Mammary epithelial cell (primary cell): ENCODE measurements at regions of chr17 and their contacts with region 1.

Region 1: DNA sequence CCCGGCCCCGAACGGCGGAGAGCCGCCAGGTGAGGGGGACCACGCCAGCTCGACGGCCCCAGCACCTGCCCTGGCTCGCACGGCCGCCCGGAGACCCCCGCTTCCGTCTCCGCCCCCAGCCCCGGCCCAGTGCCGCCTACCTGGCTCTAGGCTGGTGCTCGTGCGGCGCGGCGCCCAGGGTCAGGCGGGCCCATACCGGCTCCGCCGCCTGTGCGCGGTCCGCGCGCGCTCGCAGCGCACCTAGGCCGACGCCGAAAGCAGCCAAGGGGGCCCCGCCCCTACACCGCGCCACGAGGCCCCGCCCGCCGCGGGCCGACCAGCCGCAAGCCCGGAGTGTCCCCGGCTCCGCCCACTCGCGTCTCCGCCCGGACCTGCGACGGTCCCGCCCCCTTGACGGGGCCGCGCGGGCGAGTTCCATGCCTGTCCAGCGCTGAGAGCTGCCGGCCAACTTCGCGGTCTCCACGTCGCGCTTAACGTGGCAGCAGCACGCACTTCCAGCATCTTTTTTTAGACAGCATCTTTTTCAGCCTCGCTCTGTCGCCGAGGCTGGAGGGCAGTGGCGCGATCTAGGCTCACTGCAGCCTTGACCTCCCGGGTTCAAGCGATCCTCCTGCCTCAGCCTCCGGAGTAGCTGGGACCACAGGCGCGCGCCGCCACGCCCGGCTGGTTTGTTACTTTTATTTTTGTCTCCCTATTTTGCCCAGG is at the start of gene SLC25A39:
- DNase-seq: peak; percentile 92
- H3K4me3 ChIP-seq: peak within 1 kb of the TSS; percentile 77 to 85 (median 83)
- H3K27ac ChIP-seq: peak within 1 kb of the TSS; percentile 73
- H3K4me1 ChIP-seq: peaks cover 8% of the 10 kb centered on the region
- H3K27me3 ChIP-seq: no peaks in the 10 kb centered on the region
- CTCF ChIP-seq: no peak
- total RNA-seq, gene SLC25A39: 116 to 169 TPM

Region 2: DNA sequence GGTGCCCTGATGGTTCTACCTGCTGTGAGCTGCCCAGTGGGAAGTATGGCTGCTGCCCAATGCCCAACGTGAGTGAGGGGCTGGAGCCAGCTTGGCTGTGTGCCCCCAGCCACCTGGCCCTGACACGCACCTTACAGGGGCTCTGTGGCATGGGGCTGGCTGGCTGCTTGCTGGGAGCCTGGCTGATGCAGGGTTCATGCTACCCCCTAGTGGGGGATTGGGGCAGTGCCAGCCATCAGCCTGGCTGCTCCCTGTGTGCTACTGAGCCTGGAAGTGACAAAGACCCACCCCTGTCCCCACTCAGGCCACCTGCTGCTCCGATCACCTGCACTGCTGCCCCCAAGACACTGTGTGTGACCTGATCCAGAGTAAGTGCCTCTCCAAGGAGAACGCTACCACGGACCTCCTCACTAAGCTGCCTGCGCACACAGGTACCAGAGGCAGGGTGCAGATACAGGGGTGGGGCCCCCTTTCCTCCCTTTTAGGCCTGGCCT is 26.1 kb after region 1 on chr17:
- CTCF ChIA-PET with region 1: interaction called, 3 read pairs
- dilution Hi-C with region 1: no loop called
- in situ Hi-C with region 1: no loop called
- intact Hi-C with region 1: loop called (anchors 1 kb)
- DNase-seq: peak; percentile 32
- H3K4me3 ChIP-seq: no peak overlapping the region
- H3K27ac ChIP-seq: no peak overlapping the region
- H3K4me1 ChIP-seq: peaks cover 26% of the 10 kb centered on the region
- H3K27me3 ChIP-seq: no peaks in the 10 kb centered on the region
- CTCF ChIP-seq: peak; percentile 71 to 86

Region 3: GRCh38 chr17:44655983-44656710 is 331.4 kb after region 1 on chr17 and contains the start of gene MEIOC:
- CTCF ChIA-PET with region 1: no interaction called
- dilution Hi-C with region 1: no loop called
- in situ Hi-C with region 1: no loop called
- intact Hi-C with region 1: no loop called
- DNase-seq: peak; percentile 9
- H3K4me3 ChIP-seq: peak within 1 kb of the TSS in 2 of 3 experiments; percentile 1 to 7
- H3K27ac ChIP-seq: no peak within 1 kb of the TSS
- H3K4me1 ChIP-seq: no peaks in the 10 kb centered on the region
- H3K27me3 ChIP-seq: peaks cover 13% of the 10 kb centered on the region
- CTCF ChIP-seq: no peak
- total RNA-seq, gene MEIOC: 0.17 TPM in 1 of 2 donors, not detected in the other